Naive thymus-derived CD4-positive, alpha-beta T cell (primary cell): ENCODE measurements at regions of chr1 and their contacts with region 1.

Region 1: DNA sequence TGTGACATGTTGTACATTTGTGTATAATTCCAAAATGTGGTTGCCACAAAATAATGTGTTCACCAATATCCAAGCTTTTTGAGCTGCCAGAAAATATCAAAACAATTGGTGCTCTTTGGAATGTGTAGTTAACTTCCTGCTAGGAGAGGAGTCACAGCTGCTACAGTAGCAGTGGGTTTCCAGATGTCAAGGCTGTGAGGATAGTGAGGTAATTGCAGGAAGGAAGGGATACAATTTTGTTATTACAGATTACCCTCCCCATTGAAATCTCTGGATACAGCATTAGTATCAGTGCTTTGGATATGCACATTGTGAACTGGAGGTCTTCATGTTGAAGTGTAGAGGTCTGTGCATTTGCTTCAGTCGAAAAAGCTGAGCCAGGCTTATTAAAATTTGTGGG is 253.2 kb downstream of the PTPRC start:
- DNase-seq: no peak
- ATAC-seq: no peak
- H3K4me3 ChIP-seq: no peak overlapping the region
- H3K4me3 Mint-ChIP-seq: no peak overlapping the region
- H3K27ac ChIP-seq: no peak overlapping the region
- H3K27ac Mint-ChIP-seq: no peak overlapping the region
- H3K4me1 ChIP-seq: no peaks in the 10 kb centered on the region
- H3K4me1 Mint-ChIP-seq: peaks cover 3 to 35% (median 6%) of the 10 kb centered on the region in 7 donors
- H3K27me3 ChIP-seq: no peaks in the 10 kb centered on the region
- H3K27me3 Mint-ChIP-seq: no peaks in the 10 kb centered on the region

Region 2: GRCh38 chr1:198873696-198874230 is 18.3 kb before region 1 on chr1:
- CTCF ChIA-PET with region 1: no interaction called
- POLR2A ChIA-PET with region 1: no interaction called
- intact Hi-C with region 1: loop called in 1 of 2 experiments (anchors 2 kb)
- DNase-seq: no peak
- ATAC-seq: no peak
- H3K4me3 ChIP-seq: no peak overlapping the region
- H3K4me3 Mint-ChIP-seq: no peak overlapping the region
- H3K27ac ChIP-seq: no peak overlapping the region
- H3K27ac Mint-ChIP-seq: peak overlapping the region in 1 of 9 donors; percentile 69
- H3K4me1 ChIP-seq: no peaks in the 10 kb centered on the region
- H3K4me1 Mint-ChIP-seq: peaks cover 0 to 26% (median 6%) of the 10 kb centered on the region in 7 donors
- H3K27me3 ChIP-seq: no peaks in the 10 kb centered on the region
- H3K27me3 Mint-ChIP-seq: no peaks in the 10 kb centered on the region